Right ventricle myocardium inferior (tissue), 1 donor: ENCODE measurements at regions of chr20 and their contacts with region 1.

Region 1: DNA sequence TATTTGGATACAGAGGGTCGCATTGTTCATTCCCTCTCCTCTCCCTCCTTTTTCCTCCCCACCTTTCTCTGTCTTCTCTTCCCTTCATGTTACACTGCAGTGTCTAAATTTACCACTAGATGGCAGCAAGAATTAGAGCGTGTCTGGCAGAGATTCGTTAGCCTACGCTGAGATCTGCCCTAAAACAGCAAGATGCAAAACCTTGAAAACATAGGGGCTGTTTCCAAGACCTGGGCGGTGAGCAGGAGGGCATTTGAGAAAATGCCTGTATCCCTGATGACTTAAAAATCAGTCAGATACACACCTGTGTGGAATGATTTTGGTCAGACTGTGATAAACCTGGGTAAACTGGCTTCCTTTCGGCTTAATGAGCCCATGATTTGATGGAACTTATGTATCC is 101.5 kb upstream of the ISM1 start:
- DNase-seq: no peak
- ATAC-seq: peak; percentile 57

Region 2: DNA sequence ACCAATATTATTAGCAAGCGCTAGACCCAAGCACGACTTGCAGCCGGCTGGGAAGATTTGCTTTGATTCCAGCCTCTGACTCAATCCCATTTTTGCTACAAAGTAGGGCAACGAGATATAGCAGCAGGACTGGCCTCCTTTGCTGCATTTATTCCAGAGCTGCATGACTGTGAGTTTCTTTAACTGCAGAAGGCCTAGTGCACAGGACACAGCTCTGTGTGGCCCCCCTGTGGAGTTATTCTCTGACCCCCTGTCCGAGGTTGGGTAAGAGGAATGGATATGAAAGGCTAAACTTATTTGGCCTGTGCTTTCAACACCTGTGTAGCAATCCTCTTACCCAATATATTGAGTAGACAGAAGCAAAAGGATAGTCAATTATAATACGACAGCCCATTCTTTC is 244.1 kb before region 1 on chr20:
- intact Hi-C with region 1: no loop called
- DNase-seq: no peak
- ATAC-seq: peak; percentile 31

Region 3: DNA sequence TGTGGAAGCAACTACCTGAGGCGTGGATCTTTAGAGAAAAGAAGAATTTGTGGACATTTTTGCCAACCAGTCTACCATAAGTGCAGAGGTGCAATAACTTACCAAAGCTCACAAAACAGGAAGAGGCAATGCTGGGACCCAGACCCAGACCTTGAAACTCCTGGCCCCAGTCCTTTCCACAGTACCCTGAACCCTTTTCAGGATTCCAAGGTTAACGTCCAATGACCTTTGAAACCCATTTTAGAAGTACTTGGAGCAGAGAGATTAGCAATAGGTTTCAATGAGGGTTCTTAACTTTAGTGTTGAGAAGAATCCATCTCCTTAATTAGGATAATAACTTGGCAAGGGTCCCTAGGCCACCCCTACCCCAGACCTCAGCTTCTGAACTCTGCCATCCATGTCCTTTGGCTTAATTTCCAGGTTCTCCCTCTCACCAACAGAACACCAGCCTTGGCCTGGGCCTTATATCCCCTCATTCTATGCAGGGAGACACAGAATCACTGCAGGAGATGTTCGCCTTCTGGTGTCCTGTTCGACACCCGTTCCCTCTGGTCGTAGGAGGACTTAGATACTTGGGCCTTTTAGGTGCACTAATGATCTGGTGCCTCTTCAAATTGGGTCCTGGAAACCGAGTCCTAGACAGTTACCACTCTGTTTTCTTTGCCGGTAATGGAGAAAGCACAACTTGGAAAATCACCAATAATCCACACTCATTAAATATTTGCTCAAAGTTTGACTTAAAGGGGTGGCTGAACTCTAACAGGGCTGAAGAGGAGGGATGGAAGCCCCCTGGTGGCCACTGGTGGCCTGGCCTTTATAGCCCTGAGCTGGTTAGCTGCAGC is 142.1 kb after region 1 on chr20:
- intact Hi-C with region 1: loop called (anchors 10 kb)
- DNase-seq: no peak
- ATAC-seq: no peak

Region 4: DNA sequence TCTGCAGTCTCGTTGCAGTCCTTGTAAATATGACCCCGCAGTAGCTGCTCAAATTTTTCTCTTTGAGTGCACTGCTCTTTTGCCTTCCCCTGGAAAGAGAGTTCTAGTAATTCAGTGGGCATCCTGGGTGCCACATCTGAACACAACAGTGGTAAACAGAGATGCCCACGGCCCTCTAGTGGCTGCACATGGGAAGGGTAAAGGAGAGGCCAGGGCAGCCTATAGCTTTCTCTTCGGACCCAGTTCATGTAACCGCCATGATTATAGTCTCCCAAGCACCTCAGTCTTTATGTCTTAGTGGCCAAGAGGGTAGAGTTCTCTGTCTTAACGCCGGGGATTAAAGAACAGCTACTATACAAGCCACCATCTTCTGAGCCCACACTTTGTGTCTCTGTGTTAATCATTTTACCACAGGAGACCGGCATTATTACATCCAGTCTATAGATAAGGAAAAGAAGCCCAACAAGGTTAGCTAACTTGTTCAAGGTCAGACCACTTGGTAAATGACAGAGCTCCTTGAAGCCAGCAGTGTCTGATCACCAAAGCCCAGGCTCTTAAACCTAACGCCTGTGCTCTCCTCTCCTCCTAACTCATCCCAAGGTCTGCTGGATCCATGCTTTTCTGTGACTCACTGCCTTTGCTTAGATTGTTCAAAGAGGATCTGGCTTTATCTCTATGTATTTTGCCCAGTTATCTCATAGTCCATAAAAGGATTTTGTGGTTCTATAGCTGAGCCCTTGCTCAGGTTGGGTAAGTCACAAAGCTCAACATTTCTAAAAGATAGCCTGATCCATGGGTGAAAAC is 183.3 kb after region 1 on chr20:
- intact Hi-C with region 1: loop called (anchors 2 kb)
- DNase-seq: no peak
- ATAC-seq: peak; percentile 42

Region 5: GRCh38 chr20:13546497-13547131 is 427.0 kb after region 1 on chr20:
- intact Hi-C with region 1: loop called (anchors 5 kb)
- DNase-seq: peak; percentile 67
- ATAC-seq: no peak

Region 6: GRCh38 chr20:13771853-13772453 is 652.4 kb after region 1 on chr20:
- intact Hi-C with region 1: loop called (anchors 2 kb)
- DNase-seq: no peak
- ATAC-seq: no peak